Cardiac septum (tissue), 1 donor: ENCODE measurements at regions of chr3 and their contacts with region 1.

Region 1: GRCh38 chr3:177835008-177835407 is 637.7 kb upstream of the TBL1XR1 start:
- DNase-seq: no peak

Region 2: GRCh38 chr3:177694316-177694715 is 140.7 kb before region 1 on chr3:
- intact Hi-C with region 1: no loop called
- DNase-seq: no peak

Region 3: GRCh38 chr3:177887475-177887874 is 52.5 kb after region 1 on chr3:
- intact Hi-C with region 1: loop called (anchors 10 kb)
- DNase-seq: no peak

Region 4: GRCh38 chr3:178022599-178022998 is 187.6 kb after region 1 on chr3:
- intact Hi-C with region 1: no loop called
- DNase-seq: no peak